Heart right ventricle (tissue), 16 donors: ENCODE measurements at regions of chr5 and their contacts with region 1.

Region 1: GRCh38 chr5:150333400-150333799 is 24.1 kb upstream of the TCOF1 start:
- DNase-seq: no peak
- ATAC-seq: no peak
- H3K4me3 ChIP-seq: no peak overlapping the region
- H3K27ac ChIP-seq: no peak overlapping the region
- H3K4me1 ChIP-seq: no peaks in the 10 kb centered on the region
- H3K27me3 ChIP-seq: no peaks in the 10 kb centered on the region
- CTCF ChIP-seq: no peak

Region 2: DNA sequence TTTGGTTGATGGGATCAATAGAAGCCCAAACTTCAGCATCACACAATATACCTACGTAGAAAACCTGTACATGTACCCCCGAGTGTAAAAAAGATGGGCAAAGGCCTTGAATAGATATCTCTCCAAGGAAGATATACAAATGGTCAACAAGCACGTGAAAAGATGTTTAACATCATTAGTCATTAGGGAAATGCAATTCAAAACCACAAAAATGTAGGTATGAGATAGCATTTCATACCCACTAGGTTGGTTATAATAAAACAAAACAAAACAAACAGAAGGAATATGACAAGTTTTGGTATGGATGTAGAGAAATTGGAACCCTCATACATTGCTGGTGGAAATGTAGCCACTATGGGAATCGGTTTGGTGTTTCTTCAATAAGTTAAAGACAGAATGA is 636.4 kb before region 1 on chr5:
- intact Hi-C with region 1: no loop called
- DNase-seq: no peak
- ATAC-seq: no peak
- H3K4me3 ChIP-seq: no peak overlapping the region
- H3K27ac ChIP-seq: no peak overlapping the region
- H3K4me1 ChIP-seq: peaks cover 0 to 28% (median 15%) of the 10 kb centered on the region in 9 donors
- H3K27me3 ChIP-seq: no peaks in the 10 kb centered on the region
- CTCF ChIP-seq: no peak

Region 3: GRCh38 chr5:150263801-150264621 is 69.4 kb before region 1 on chr5:
- intact Hi-C with region 1: loop called in 1 of 10 experiments (anchors 2 kb)
- DNase-seq: no peak
- ATAC-seq: peak; percentile 7 to 75 (median 40)
- H3K4me3 ChIP-seq: no peak overlapping the region
- H3K27ac ChIP-seq: no peak overlapping the region
- H3K4me1 ChIP-seq: peaks cover 0 to 13% (median 7%) of the 10 kb centered on the region in 9 donors
- H3K27me3 ChIP-seq: no peaks in the 10 kb centered on the region
- CTCF ChIP-seq: no peak